GM13976 (cell line): ENCODE measurements at regions of chr17 and their contacts with region 1.

Region 1: DNA sequence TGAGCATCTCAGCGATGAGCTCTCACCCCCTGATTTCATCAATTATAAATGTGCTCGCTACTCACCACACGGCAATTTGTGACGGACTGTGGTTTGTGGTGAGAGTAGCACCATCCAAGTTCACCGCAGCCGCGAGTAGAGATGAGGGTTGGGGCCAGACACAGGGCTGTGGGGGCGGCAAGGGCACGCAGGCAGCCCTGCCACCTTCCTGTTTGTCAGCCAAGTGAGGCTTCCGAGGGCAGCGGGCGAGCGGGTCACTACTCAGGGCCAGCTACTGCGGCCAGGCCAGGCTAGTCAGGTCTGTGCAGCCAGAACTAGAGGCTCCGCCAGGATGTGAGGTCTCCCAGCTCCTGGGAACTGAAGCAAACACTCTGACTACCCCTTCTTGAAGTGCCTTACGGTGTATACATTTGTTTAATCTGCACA is 39.6 kb upstream of the MEOX1 start:
- DNase-seq: peak; percentile 62
- CTCF ChIP-seq: no peak

Region 2: GRCh38 chr17:43456661-43457361 is 244.5 kb before region 1 on chr17:
- in situ Hi-C with region 1: no loop called
- DNase-seq: no peak
- CTCF ChIP-seq: no peak

Region 3: GRCh38 chr17:43745541-43745940 is 44.2 kb after region 1 on chr17:
- in situ Hi-C with region 1: loop called (anchors 5 kb)
- DNase-seq: no peak
- CTCF ChIP-seq: no peak

Region 4: GRCh38 chr17:44097110-44097958 is 396.0 kb after region 1 on chr17:
- in situ Hi-C with region 1: no loop called
- DNase-seq: no peak
- CTCF ChIP-seq: no peak